PC-3 (cell line): ENCODE measurements at regions of chr12 and their contacts with region 1.

Region 1: DNA sequence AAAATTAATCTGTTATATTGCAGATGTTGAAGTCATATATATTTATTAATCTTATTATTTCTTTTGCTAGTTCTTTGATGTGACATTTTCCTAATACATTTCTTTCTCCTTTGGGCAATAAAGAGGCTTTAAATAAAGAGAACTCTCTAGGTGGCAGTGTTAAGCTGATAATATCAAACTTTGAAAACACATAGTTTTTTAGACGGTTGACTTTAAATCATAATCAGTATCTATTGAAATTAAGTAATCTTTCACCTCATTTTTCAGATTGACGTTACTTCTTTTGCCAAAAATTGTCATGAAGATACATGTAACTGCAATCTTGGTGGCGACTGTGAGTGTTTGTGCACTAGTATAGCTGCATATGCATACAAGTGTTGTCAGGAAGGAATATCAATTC is 130.8 kb upstream of the PTPRQ start:
- DNase-seq: peak; percentile 49
- ATAC-seq: 0 out of 2 replicates have a peak, but pooled peaks have one; percentile 33
- H3K4me3 ChIP-seq: no peak overlapping the region
- H3K27ac ChIP-seq: no peak overlapping the region
- H3K4me1 ChIP-seq: no peaks in the 10 kb centered on the region
- H3K27me3 ChIP-seq: no peaks in the 10 kb centered on the region
- CTCF ChIP-seq: peak; percentile 55

Region 2: DNA sequence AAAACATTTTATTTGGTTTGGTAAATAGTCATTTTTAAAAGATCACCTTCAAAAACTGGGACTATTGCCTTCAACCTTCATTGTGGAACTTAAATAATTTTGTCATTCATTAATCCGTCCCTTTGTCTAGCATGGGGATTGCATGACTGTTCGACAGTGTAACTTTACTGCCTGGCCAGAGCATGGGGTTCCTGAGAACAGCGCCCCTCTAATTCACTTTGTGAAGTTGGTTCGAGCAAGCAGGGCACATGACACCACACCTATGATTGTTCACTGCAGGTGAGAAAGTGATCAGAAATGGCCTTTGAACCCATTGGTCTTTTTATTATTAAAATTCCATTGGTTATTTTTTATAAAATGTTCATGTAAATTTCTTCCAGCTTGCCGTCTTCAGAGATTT is 357.0 kb after region 1 on chr12:
- CTCF ChIA-PET with region 1: no interaction called
- POLR2A ChIA-PET with region 1: no interaction called
- intact Hi-C with region 1: loop called (anchors 5 kb)
- DNase-seq: no peak
- ATAC-seq: no peak
- H3K4me3 ChIP-seq: no peak overlapping the region
- H3K27ac ChIP-seq: no peak overlapping the region
- H3K4me1 ChIP-seq: no peaks in the 10 kb centered on the region
- H3K27me3 ChIP-seq: peaks cover 5% of the 10 kb centered on the region; the same call in 1 of the 2 replicates
- CTCF ChIP-seq: no peak